H1 (cell line): ENCODE measurements at regions of chr1 and their contacts with region 1.

Region 1: GRCh38 chr1:185170291-185170848 is 13.4 kb downstream of the SWT1 start:
- DNase-seq: peak; percentile 33 to 65
- H3K4me3 ChIP-seq: no peak overlapping the region
- H3K27ac ChIP-seq: no peak overlapping the region
- H3K4me1 ChIP-seq: peaks cover 0 to 5% (median 0%) of the 10 kb centered on the region in 4 experiments; a peak in 2 of 7 replicates
- H3K27me3 ChIP-seq: no peaks in the 10 kb centered on the region
- CTCF ChIP-seq: peak; percentile 35 to 63 (median 61)
- EP300 ChIP-seq: no peak
- POLR2A ChIP-seq: no peak
- RAD21 ChIP-seq: peak; percentile 58 to 73

Region 2: GRCh38 chr1:184973272-184974055 is 196.9 kb before region 1 on chr1:
- CTCF ChIA-PET with region 1: interaction called, 11 read pairs
- POLR2A ChIA-PET with region 1: interaction called, 6 read pairs
- DNase-seq: peak in 1 of 2 experiments; percentile 77
- H3K4me3 ChIP-seq: peak overlapping the region; percentile 62 to 91 (median 72)
- H3K27ac ChIP-seq: no peak overlapping the region
- H3K4me1 ChIP-seq: peaks cover 0 to 5% (median 1%) of the 10 kb centered on the region in 4 experiments; a peak in 3 of 7 replicates
- H3K27me3 ChIP-seq: peaks cover 3 to 22% (median 14%) of the 10 kb centered on the region in 4 experiments
- CTCF ChIP-seq: no peak
- EP300 ChIP-seq: no peak
- POLR2A ChIP-seq: peak; percentile 39 to 47; a peak in 2 of 3 replicates
- RAD21 ChIP-seq: no peak

Region 3: GRCh38 chr1:185044981-185045813 is 125.2 kb before region 1 on chr1 and contains the start of gene RNF2:
- CTCF ChIA-PET with region 1: interaction called, 10 read pairs
- POLR2A ChIA-PET with region 1: interaction called, 5 read pairs
- DNase-seq: peak; percentile 47 to 88
- H3K4me3 ChIP-seq: peak within 1 kb of the TSS; percentile 70 to 93 (median 80)
- H3K27ac ChIP-seq: peak within 1 kb of the TSS; percentile 68
- H3K4me1 ChIP-seq: peaks cover 0 to 7% (median 2%) of the 10 kb centered on the region in 4 experiments; a peak in 3 of 7 replicates
- H3K27me3 ChIP-seq: peaks cover 0 to 9% (median 5%) of the 10 kb centered on the region in 4 experiments; a peak in 6 of 7 replicates
- CTCF ChIP-seq: no peak
- EP300 ChIP-seq: no peak
- POLR2A ChIP-seq: peak; percentile 64 to 72; a peak in 1 of 3 replicates
- RAD21 ChIP-seq: 0 out of 4 replicates have a peak, but pooled peaks of 1 of the 2 experiments have one; percentile 12
- total RNA-seq, gene RNF2: 52.7 and 58.9 TPM in 2 replicates

Region 4: GRCh38 chr1:185096531-185096930 is 73.8 kb before region 1 on chr1:
- CTCF ChIA-PET with region 1: no interaction called
- POLR2A ChIA-PET with region 1: no interaction called
- DNase-seq: no peak
- H3K4me3 ChIP-seq: no peak overlapping the region
- H3K27ac ChIP-seq: no peak overlapping the region
- H3K4me1 ChIP-seq: no peaks in the 10 kb centered on the region
- H3K27me3 ChIP-seq: no peaks in the 10 kb centered on the region
- CTCF ChIP-seq: no peak
- EP300 ChIP-seq: no peak
- POLR2A ChIP-seq: no peak
- RAD21 ChIP-seq: no peak

Region 5: GRCh38 chr1:185156854-185157598 is 13.3 kb before region 1 on chr1 and contains the starts of genes SWT1 and TRMT1L:
- CTCF ChIA-PET with region 1: interaction called, 60 read pairs
- POLR2A ChIA-PET with region 1: no interaction called
- DNase-seq: peak; percentile 96 to 98
- H3K4me3 ChIP-seq: peak within 1 kb of the TSS; percentile 85 to 97 (median 87)
- H3K27ac ChIP-seq: peak within 1 kb of the TSS; percentile 92
- H3K4me1 ChIP-seq: no peaks in the 10 kb centered on the region; a peak in 3 of 7 replicates
- H3K27me3 ChIP-seq: no peaks in the 10 kb centered on the region
- CTCF ChIP-seq: no peak
- EP300 ChIP-seq: no peak
- POLR2A ChIP-seq: peak; percentile 88 to 94
- RAD21 ChIP-seq: no peak
- total RNA-seq, gene SWT1: 6.2 and 8.1 TPM in 2 replicates
- total RNA-seq, gene TRMT1L: 22.3 and 22.5 TPM in 2 replicates

Region 6: GRCh38 chr1:185309566-185309965 is 139.2 kb after region 1 on chr1:
- CTCF ChIA-PET with region 1: no interaction called
- POLR2A ChIA-PET with region 1: no interaction called
- DNase-seq: no peak
- H3K4me3 ChIP-seq: no peak overlapping the region
- H3K27ac ChIP-seq: no peak overlapping the region
- H3K4me1 ChIP-seq: peaks cover 0 to 4% (median 0%) of the 10 kb centered on the region in 4 experiments; a peak in 1 of 7 replicates
- H3K27me3 ChIP-seq: no peaks in the 10 kb centered on the region
- CTCF ChIP-seq: no peak
- EP300 ChIP-seq: no peak
- POLR2A ChIP-seq: no peak
- RAD21 ChIP-seq: no peak

Region 7: DNA sequence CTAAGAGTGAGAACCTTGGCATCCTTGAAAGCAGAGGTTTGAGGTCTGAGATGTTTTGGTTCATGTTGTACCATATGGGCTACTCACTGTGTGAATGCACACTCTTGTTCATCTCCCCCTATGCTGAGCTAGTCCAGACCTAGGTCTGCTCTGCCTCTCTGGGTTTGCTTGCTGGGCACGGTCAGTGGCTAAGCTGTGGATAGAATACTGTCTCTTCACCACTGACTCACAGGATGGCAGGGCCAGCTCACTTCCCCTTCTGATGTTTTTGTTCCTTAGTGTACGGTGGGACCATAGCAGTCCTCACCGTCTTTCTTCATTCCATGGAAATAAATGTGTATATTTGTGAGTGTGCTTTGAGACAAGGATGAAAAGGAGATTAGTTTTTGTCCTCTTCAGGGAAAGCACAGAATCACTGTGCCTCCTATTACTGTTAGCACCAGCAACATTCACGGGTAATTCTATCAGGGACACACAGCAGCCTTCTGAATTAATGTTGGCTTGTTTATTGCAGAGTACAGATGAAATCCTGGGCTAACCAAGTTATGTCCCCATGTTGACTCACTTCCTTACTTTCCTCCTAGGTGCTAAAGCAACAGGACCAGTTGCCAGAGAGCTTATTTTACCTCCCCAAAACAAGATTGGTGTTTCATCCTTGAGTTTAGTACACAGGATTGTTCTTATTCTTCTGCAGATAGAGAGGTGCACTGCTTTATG is 203.6 kb after region 1 on chr1:
- CTCF ChIA-PET with region 1: no interaction called
- POLR2A ChIA-PET with region 1: no interaction called
- DNase-seq: no peak
- H3K4me3 ChIP-seq: no peak overlapping the region
- H3K27ac ChIP-seq: no peak overlapping the region
- H3K4me1 ChIP-seq: peaks cover 0 to 3% (median 0%) of the 10 kb centered on the region in 4 experiments; a peak in 1 of 7 replicates
- H3K27me3 ChIP-seq: 0 out of 7 replicates have a peak, but pooled peaks cover 0 to 2% (median under 1%) of the 10 kb centered on the region in 4 experiments
- CTCF ChIP-seq: no peak
- EP300 ChIP-seq: no peak
- POLR2A ChIP-seq: no peak
- RAD21 ChIP-seq: no peak